Esophagus squamous epithelium (tissue), 5 donors: ENCODE measurements at regions of chr5 and their contacts with region 1.

Region 1: GRCh38 chr5:153135411-153135810 is 355.1 kb upstream of the GRIA1 start:
- DNase-seq: no peak
- H3K4me3 ChIP-seq: no peak overlapping the region
- H3K27ac ChIP-seq: no peak overlapping the region
- H3K4me1 ChIP-seq: no peaks in the 10 kb centered on the region
- H3K27me3 ChIP-seq: no peaks in the 10 kb centered on the region
- CTCF ChIP-seq: no peak
- POLR2A ChIP-seq: no peak

Region 2: GRCh38 chr5:152560512-152561137 is 574.8 kb before region 1 on chr5:
- intact Hi-C with region 1: loop called (anchors 10 kb)
- DNase-seq: no peak
- H3K4me3 ChIP-seq: no peak overlapping the region
- H3K27ac ChIP-seq: no peak overlapping the region
- H3K4me1 ChIP-seq: no peaks in the 10 kb centered on the region
- H3K27me3 ChIP-seq: no peaks in the 10 kb centered on the region
- CTCF ChIP-seq: peak in 5 of 6 experiments; percentile 63 to 77 (median 67)
- POLR2A ChIP-seq: no peak